ENCODE measurements at regions of chr5 and their contacts with region 1.

Region 1: DNA sequence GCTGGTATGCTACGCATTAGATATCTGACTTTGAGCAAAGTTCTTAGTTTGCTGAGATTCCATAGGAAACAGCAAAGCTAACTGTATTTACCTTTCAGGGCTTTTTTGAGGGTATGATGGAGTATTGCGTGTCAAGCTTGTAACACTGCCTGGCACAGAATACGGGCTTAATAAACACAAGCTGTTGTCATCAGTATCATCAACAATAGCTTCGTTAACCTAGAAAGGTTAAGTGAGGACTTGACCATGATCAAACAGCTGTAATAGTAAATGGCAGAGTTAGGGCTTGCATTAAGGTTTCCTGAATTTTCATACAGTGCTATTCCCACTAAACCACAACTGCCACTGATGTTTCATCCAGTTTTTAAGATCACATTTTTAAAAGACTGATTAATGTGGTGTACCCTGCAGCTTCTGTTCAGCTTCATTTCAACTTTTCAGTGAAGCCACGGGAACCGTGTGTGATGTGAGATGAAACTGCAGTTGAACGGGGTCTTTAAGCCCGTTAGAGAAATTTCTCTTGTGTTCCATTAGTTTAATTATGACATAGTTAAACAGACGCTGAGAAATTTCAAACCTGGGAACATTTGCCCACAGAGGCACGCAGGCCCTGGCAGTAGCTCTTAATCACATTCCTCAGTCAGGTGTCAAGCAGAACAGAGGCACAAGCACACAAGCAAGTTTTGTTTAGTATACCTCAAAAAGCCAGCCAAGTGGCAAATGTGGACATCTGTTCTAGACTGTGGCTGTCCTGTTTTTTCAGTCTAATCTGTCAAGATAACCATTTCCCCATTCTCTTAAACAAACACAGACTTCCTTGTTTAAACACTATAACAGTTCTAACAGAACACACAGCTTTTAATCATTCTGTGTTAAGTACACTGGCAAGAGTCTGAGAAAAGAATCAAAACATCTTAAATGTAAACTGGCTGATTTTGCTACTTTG is 147.1 kb downstream of the ZNF608 start:
- DNase-seq: no peak
- ATAC-seq: no peak
- H3K4me3 ChIP-seq: no peak overlapping the region
- H3K27ac ChIP-seq: no peak overlapping the region
- H3K4me1 ChIP-seq: peaks cover 16 to 23% of the 10 kb centered on the region in 2 experiments
- H3K27me3 ChIP-seq: no peaks in the 10 kb centered on the region
- CTCF ChIP-seq: no peak
- POLR2A ChIP-seq: no peak
- RAD21 ChIP-seq: no peak

Region 2: DNA sequence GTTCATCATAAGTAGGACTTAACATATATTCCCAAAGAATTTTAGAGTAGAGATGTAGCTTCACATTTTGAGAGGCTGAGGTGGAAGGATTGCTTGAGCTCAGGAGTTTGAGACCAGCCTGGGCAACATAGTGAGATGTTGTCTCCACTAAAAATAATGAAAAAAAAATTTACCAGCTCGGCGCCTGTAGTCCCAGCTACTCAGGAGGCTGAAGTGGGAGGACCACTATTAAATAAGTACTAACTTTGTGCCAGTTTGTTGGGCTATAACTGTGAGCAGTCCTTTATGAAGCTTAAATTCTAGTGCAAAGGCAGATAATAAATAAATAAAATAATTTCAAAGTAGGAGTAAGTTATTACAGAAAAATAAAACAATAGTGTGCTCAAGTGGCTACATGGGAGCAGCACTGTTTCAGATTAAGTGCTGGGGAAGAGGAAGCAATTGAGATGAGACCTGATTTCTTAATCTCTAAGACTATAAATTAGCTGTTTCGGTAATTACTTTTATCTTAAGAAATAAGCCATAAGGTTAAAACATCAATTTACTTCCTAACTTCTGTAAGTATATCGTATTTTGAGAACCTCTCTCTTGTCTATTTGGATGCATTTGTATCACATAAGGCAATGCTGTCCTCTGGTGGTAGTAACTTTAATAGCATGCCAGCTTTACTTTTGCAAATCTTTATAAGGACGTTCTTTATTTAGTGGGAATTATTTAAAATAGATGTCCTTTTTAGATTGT is 988.5 kb before region 1 on chr5:
- CTCF ChIA-PET with region 1: no interaction called
- POLR2A ChIA-PET with region 1: no interaction called
- RAD21 ChIA-PET with region 1: no interaction called
- intact Hi-C with region 1: no loop called
- DNase-seq: peak; percentile 54
- ATAC-seq: peak; percentile 75
- H3K4me3 ChIP-seq: no peak overlapping the region
- H3K27ac ChIP-seq: no peak overlapping the region
- H3K4me1 ChIP-seq: no peaks in the 10 kb centered on the region
- H3K27me3 ChIP-seq: no peaks in the 10 kb centered on the region
- CTCF ChIP-seq: peak; percentile 66 to 99 (median 84); a peak in 5 of 6 replicates
- POLR2A ChIP-seq: no peak
- RAD21 ChIP-seq: peak; percentile 86

Region 3: DNA sequence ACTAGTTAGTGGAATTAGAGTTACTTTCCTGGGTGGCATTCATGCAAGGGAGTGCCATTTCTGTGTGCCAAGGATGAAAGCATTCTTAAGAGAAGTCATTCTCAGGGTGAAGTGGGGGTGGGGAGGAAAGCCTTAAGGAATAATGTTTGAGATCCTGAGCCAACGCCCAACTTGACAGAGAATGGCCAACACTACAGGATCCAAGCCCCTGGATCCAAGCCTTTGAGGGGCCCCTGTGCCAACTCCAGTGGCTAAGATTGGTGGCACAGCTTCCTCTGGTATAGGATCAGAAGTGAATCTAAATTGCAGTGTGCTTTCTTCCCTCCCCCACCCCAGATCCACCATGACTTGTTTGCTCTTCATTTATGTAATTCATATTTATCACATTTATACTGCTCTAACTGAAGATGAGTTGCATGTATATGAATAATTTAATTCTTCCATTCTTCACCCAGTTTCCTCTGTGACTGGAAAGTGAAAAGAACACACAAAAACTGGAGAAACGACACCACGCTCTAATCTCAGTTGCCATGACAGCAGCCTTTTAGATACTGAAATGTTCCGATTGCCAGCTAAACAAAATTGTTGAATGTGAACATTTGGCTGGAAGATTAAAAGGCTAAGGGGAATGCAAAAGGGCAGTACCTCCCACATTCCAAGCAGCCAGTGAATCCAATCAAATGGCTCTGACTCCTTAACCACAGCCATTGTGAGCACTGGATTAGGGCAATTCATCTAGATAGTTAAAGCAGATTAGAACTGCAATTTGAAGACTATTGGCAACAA is 142.6 kb after region 1 on chr5:
- CTCF ChIA-PET with region 1: no interaction called
- POLR2A ChIA-PET with region 1: no interaction called
- RAD21 ChIA-PET with region 1: no interaction called
- intact Hi-C with region 1: loop called (anchors 5 kb)
- DNase-seq: peak; percentile 75
- ATAC-seq: peak; percentile 62
- H3K4me3 ChIP-seq: peak overlapping the region in 1 of 2 experiments; percentile 44; a peak in 3 of 4 replicates
- H3K27ac ChIP-seq: peak overlapping the region; percentile 79
- H3K4me1 ChIP-seq: peaks cover 65 to 79% of the 10 kb centered on the region in 2 experiments
- H3K27me3 ChIP-seq: no peaks in the 10 kb centered on the region
- CTCF ChIP-seq: no peak
- POLR2A ChIP-seq: no peak
- RAD21 ChIP-seq: peak; percentile 2; the same call in 1 of the 2 replicates

Region 4: GRCh38 chr5:125311743-125312142 is 712.4 kb after region 1 on chr5:
- CTCF ChIA-PET with region 1: no interaction called
- POLR2A ChIA-PET with region 1: no interaction called
- RAD21 ChIA-PET with region 1: no interaction called
- intact Hi-C with region 1: no loop called
- DNase-seq: no peak
- ATAC-seq: no peak
- H3K4me3 ChIP-seq: no peak overlapping the region
- H3K27ac ChIP-seq: no peak overlapping the region
- H3K4me1 ChIP-seq: peaks cover 0 to 9% of the 10 kb centered on the region in 2 experiments; a peak in 2 of 4 replicates
- H3K27me3 ChIP-seq: no peaks in the 10 kb centered on the region
- CTCF ChIP-seq: no peak
- POLR2A ChIP-seq: no peak
- RAD21 ChIP-seq: no peak